Activated B cell treated with CpG ODN at 0.5 μM for 24 hours (primary cell): ENCODE measurements at regions of chr3 and their contacts with region 1.

Region 1: DNA sequence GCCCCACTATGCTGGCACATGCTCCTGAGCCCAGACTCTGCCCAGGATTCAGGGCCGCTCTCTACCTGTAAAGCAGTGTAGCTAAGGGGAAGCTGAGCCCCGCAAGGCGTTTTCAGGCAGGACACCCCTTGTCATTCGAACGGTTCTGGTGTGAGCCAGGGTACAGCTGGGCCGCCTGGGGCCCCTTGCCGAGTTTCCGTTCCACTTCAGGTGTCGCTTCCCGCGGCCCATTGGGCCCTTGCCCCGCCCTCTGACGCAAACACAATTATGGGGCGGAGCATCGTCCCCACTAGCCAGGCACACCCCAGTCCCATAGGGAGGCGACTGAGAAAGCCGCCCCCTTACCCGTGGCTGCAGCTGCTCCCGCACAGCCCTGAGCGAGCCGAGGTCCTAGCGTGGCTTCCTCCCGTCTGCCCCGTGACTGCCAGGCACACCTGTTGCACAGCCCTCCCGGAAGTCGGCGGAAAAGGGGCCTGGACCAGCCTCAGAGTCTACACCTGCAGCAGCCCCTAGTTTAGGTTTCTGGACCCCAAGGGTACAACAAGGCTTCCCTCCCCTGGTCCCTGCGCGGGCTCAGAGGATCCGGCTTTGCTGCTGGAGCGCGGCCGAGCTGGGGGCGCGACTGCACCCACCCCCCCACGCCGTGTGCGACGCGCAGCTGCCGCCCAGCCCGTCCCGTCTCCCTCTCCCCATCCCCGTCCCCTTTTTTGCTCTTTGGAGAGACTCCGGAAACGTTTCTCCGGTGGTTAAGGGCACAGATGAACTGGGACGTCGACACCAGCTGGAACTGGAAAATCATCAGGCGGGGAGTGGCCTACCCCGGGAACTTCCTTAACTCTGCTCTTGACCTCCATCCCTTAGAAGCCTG is at the start of gene PLSCR2:
- DNase-seq: peak; percentile 82
- ATAC-seq: peak; percentile 97
- H3K4me3 Mint-ChIP-seq: peak within 1 kb of the TSS; percentile 84
- H3K27ac Mint-ChIP-seq: peak within 1 kb of the TSS; percentile 76
- H3K4me1 Mint-ChIP-seq: peaks cover 16% of the 10 kb centered on the region
- H3K27me3 Mint-ChIP-seq: no peaks in the 10 kb centered on the region
- CTCF ChIP-seq: no peak
- total RNA-seq, gene PLSCR2: not detected in 2 replicates

Region 2: DNA sequence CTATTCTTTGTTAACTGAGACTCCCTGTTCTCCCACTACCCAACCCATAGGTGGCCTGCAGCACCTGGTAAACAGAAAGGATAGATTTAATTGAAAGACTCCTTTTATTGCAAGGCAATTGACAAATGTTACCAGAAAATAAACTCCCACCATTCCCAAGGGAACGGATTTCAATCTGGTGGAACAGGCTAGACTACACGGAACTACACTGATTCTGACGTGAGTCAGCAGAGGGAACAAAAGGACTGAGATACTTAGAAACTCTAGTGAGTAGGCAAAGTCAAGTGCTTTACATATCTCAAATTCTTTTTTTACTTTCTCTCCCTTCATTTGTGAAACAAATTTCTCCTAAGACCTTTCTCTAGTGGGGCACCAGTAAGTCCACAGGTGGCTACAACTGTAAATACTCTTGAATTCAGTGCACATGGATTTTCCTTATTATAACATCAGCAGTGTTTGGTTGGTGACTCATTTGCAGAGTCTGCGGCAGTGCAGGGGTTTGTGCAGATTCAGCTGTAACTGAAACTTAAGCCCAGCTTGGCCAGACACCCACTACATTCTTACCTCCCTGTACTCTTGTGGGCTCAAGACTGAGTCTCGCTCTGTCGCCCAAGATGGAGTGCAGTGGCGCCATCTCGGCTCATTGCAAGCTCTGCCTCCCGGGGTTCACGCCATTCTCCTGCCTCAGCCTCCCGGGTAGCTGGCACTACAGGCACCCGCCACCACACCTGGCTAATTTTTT is 34.2 kb after region 1 on chr3:
- CTCF ChIA-PET with region 1: no interaction called
- POLR2A ChIA-PET with region 1: no interaction called
- intact Hi-C with region 1: loop called (anchors 1 kb)
- DNase-seq: no peak
- ATAC-seq: peak; percentile 84
- H3K4me3 Mint-ChIP-seq: no peak overlapping the region
- H3K27ac Mint-ChIP-seq: peak overlapping the region; percentile 12
- H3K4me1 Mint-ChIP-seq: peaks cover 9% of the 10 kb centered on the region
- H3K27me3 Mint-ChIP-seq: no peaks in the 10 kb centered on the region
- CTCF ChIP-seq: no peak